Esophagus muscularis mucosa (tissue), 4 donors: ENCODE measurements at regions of chr14 and their contacts with region 1.

Region 1: GRCh38 chr14:67819563-67820421 is at the start of gene RAD51B:
- DNase-seq: peak; percentile 97
- H3K4me3 ChIP-seq: peak within 1 kb of the TSS; percentile 78 to 89 (median 83)
- H3K27ac ChIP-seq: peak within 1 kb of the TSS; percentile 4 to 77 (median 56)
- H3K4me1 ChIP-seq: peaks cover 16 to 36% (median 31%) of the 10 kb centered on the region in 4 donors
- H3K27me3 ChIP-seq: no peaks in the 10 kb centered on the region
- CTCF ChIP-seq: no peak
- EP300 ChIP-seq: no peak
- POLR2A ChIP-seq: no peak
- total RNA-seq, gene RAD51B: 2.8 to 11.1 (median 5.1) TPM

Region 2: DNA sequence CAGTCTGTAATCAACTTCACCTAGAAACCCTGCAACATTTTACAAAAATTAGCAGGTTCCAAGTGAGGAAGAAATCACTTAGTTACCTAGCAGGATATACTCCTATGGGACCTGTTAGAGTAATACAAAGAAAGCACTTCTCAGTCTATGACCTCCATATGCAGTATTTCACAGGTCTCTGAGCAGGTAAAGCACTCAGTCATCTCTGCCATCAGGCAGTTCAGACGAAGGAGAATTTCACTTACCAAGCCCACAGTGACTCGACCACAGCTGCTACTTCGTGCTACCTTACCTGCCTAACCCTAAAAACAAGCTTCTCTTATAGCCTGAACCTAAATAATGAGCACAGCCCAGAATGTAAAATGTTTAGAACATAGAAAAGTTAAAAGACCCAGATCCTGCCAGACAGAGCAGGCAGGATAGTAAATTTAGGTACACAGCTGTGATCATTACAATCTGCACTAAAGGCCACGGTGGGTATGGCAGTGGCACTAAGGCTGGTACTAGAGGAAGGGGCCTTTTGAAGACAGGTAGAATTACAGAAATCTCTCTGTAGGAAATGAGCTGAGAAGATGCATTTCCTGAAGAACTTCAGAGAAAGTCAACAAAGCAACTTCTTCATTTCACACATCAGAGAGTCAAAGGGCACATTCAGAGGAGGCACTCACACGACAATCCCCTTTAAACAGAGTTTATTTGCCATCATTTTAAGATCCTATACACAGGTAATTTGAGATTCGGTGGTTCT is 1297.4 kb after region 1 on chr14:
- intact Hi-C with region 1: loop called (anchors 10 kb)
- DNase-seq: no peak
- H3K4me3 ChIP-seq: no peak overlapping the region
- H3K27ac ChIP-seq: no peak overlapping the region
- H3K4me1 ChIP-seq: peaks cover 1 to 11% (median 3%) of the 10 kb centered on the region in 4 donors
- H3K27me3 ChIP-seq: no peaks in the 10 kb centered on the region
- CTCF ChIP-seq: no peak
- EP300 ChIP-seq: no peak
- POLR2A ChIP-seq: no peak